Caco-2 (cell line): ENCODE measurements at regions of chr2 and their contacts with region 1.

Region 1: GRCh38 chr2:218671654-218672566 is at the starts of genes RNF25 and STK36:
- DNase-seq: peak; percentile 86 to 88
- H3K4me3 ChIP-seq: peak within 1 kb of the TSS; percentile 86
- H3K4me3 Mint-ChIP-seq: peak within 1 kb of the TSS; percentile 96
- H3K27ac Mint-ChIP-seq: peak within 1 kb of the TSS; percentile 91
- H3K4me1 ChIP-seq: peaks cover 11% of the 10 kb centered on the region; the same call in 1 of the 2 replicates
- H3K4me1 Mint-ChIP-seq: peaks cover 11% of the 10 kb centered on the region
- H3K27me3 ChIP-seq: no peaks in the 10 kb centered on the region
- H3K27me3 Mint-ChIP-seq: no peaks in the 10 kb centered on the region
- CTCF ChIP-seq: no peak
- total RNA-seq, gene RNF25: 30.5 and 32.1 TPM in 2 replicates
- total RNA-seq, gene STK36: 44.1 and 56.9 TPM in 2 replicates

Region 2: GRCh38 chr2:218691234-218691633 is 19.3 kb after region 1 on chr2:
- CTCF ChIA-PET with region 1: interaction called, 19 read pairs
- POLR2A ChIA-PET with region 1: interaction called, 4 read pairs
- intact Hi-C with region 1: loop called (anchors 1 kb)
- DNase-seq: no peak
- H3K4me3 ChIP-seq: no peak overlapping the region
- H3K4me3 Mint-ChIP-seq: no peak overlapping the region
- H3K27ac Mint-ChIP-seq: no peak overlapping the region
- H3K4me1 ChIP-seq: no peaks in the 10 kb centered on the region
- H3K4me1 Mint-ChIP-seq: peaks cover 6% of the 10 kb centered on the region
- H3K27me3 ChIP-seq: no peaks in the 10 kb centered on the region
- H3K27me3 Mint-ChIP-seq: no peaks in the 10 kb centered on the region
- CTCF ChIP-seq: no peak

Region 3: DNA sequence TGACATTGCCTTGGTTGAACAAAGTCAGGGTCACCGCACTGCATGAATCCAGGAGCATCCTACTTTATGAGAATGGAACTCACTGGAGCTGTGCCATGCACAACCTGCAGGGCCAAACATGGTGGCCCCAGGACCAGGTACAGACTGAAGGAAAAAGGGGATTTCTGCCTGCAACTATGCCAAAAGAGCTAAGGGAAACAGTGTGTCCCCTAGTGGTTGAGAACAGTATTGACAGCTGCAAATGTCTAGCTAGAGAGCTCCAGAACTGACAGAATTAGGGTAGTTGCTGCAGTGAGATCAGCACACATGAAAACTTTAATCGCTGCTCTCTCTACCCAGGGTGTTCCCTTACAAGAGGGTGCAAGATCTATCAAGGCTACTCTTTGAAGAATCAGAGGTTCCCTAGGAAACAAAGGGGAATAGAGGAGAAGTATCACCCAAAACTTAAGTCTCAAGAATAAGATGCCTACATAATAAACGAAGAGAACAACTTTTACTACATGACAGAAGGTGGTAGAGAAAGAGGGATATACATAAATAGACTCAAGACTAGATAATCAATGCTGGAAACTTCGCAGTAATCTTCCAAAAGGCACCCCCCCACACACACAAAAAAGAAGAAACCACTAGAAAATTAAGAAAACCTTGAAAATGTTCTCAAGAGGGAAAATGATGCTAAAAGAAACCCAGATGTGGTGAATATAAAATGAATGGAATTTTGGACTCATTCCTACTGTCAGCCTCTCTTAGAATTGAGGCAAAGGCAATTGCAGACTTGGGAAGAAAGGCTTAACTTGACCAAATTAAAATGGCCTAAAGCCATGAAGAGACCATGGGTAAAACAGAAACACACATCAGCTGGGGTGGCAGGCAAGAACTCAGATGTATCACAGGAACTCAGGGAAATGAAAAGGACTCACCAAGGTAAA is 432.5 kb after region 1 on chr2:
- CTCF ChIA-PET with region 1: no interaction called
- POLR2A ChIA-PET with region 1: no interaction called
- intact Hi-C with region 1: no loop called
- DNase-seq: peak; percentile 60
- H3K4me3 ChIP-seq: no peak overlapping the region
- H3K4me3 Mint-ChIP-seq: no peak overlapping the region
- H3K27ac Mint-ChIP-seq: no peak overlapping the region
- H3K4me1 ChIP-seq: peaks cover 10% of the 10 kb centered on the region
- H3K4me1 Mint-ChIP-seq: peaks cover 4% of the 10 kb centered on the region
- H3K27me3 ChIP-seq: no peaks in the 10 kb centered on the region
- H3K27me3 Mint-ChIP-seq: no peaks in the 10 kb centered on the region
- CTCF ChIP-seq: peak; percentile 80 to 86